PC-3 (cell line): ENCODE measurements at regions of chr4 and their contacts with region 1.

Region 1: GRCh38 chr4:15569746-15570145 is 85.4 kb downstream of the FBXL5 start:
- DNase-seq: no peak
- ATAC-seq: no peak
- H3K4me3 ChIP-seq: no peak overlapping the region
- H3K27ac ChIP-seq: no peak overlapping the region
- H3K4me1 ChIP-seq: no peaks in the 10 kb centered on the region
- H3K27me3 ChIP-seq: no peaks in the 10 kb centered on the region
- CTCF ChIP-seq: no peak

Region 2: DNA sequence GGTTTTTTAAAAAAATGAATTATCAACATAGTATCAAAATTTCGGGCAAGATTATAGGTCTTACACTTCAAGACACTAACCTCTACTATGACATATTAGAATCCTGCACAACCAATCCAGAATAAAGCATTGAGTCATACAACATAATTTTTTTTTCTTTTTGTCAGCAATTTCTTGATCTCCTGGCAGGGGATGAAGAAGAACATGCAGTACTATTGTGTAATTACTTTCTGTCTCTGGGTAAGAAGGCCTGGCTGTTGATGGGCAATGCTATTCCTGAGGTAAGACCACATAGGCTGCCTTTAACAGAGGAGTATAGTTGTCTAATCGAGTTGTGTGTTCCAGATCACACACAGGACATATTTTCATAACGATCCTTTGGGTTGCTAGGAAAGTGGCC is 17.9 kb after region 1 on chr4:
- CTCF ChIA-PET with region 1: no interaction called
- POLR2A ChIA-PET with region 1: no interaction called
- intact Hi-C with region 1: no loop called
- DNase-seq: no peak
- ATAC-seq: no peak
- H3K4me3 ChIP-seq: no peak overlapping the region
- H3K27ac ChIP-seq: no peak overlapping the region
- H3K4me1 ChIP-seq: no peaks in the 10 kb centered on the region
- H3K27me3 ChIP-seq: no peaks in the 10 kb centered on the region
- CTCF ChIP-seq: no peak

Region 3: DNA sequence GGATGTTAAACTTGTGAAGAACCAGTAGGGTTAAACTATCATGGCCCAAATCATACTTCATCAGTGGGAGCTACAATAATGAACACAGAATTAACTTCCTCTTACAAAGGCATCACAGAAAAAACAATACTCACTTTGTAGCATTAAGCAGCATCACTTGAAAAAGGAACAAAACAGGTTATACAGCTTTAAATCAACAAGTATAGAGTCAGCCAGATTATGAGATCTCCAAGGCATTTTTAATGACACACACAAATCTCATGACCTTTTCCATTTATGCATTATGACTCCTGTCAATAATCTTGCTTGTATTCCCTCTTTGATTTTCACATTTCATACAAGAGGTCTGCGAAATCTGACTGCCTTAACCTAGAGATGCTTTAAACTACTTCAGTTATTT is 67.1 kb after region 1 on chr4:
- CTCF ChIA-PET with region 1: no interaction called
- POLR2A ChIA-PET with region 1: no interaction called
- intact Hi-C with region 1: loop called (anchors 2 kb)
- DNase-seq: peak; percentile 68
- ATAC-seq: peak; percentile 37
- H3K4me3 ChIP-seq: no peak overlapping the region
- H3K27ac ChIP-seq: peak overlapping the region; percentile 64
- H3K4me1 ChIP-seq: peaks cover 13% of the 10 kb centered on the region; the same call in 1 of the 2 replicates
- H3K27me3 ChIP-seq: no peaks in the 10 kb centered on the region
- CTCF ChIP-seq: no peak

Region 4: DNA sequence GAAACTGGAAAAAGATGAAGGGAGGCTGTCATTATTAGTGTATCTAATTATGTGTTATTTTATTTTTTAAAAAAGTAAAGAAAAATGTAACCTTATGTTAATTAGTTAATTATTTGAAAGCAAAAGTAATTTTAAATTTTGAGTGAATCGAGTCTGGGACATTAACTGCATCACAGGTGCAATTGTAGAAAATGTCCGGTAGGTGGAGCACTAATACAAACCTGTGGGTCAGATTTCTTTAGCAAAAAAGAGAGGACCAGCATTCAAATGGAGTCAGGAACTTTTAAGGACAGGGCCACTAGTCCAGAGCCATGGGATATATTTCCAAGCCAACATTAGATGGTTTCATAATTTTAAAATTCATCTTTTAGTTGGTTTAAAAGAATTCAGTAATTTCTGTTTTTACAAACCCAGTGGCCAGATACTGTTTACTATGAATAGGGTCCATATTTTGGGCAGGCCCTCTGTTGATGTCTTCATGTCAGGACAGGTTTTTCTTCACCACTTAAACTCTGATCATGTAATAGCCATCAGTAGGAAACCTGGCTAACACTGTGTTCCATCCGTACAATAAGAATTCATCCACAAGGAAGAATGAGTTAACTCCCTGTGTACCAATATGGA is 160.3 kb after region 1 on chr4:
- CTCF ChIA-PET with region 1: no interaction called
- POLR2A ChIA-PET with region 1: no interaction called
- intact Hi-C with region 1: no loop called
- DNase-seq: peak; percentile 63
- ATAC-seq: peak; percentile 62
- H3K4me3 ChIP-seq: no peak overlapping the region
- H3K27ac ChIP-seq: no peak overlapping the region
- H3K4me1 ChIP-seq: no peaks in the 10 kb centered on the region
- H3K27me3 ChIP-seq: no peaks in the 10 kb centered on the region
- CTCF ChIP-seq: peak; percentile 68